ENCODE measurements at regions of chr19 and their contacts with region 1.

Region 1: DNA sequence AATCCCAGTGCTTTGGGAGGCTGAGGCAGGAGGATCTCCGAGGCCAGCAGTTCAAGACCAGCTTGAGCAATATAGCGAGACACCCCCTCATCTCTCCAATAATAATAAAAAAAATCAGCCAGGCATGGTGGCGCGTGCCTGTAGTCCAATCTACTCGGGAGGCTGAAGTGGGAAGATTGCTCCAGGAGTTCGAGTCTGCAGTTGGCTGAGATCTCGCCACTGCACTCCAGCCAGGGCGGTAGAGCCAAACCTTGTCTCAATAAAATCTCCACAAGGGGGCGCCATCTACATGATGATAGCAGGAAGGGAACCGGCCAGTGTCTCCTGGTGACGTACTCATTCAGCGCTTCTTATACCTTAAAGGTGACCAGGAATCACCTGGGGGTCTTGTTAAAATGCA is 13.6 kb upstream of the C5AR1 start:
- DNase-seq: peak; percentile 90
- H3K4me3 ChIP-seq: no peak overlapping the region
- H3K27ac ChIP-seq: no peak overlapping the region
- H3K4me1 ChIP-seq: no peaks in the 10 kb centered on the region
- H3K27me3 ChIP-seq: no peaks in the 10 kb centered on the region
- CTCF ChIP-seq: peak; percentile 64

Region 2: DNA sequence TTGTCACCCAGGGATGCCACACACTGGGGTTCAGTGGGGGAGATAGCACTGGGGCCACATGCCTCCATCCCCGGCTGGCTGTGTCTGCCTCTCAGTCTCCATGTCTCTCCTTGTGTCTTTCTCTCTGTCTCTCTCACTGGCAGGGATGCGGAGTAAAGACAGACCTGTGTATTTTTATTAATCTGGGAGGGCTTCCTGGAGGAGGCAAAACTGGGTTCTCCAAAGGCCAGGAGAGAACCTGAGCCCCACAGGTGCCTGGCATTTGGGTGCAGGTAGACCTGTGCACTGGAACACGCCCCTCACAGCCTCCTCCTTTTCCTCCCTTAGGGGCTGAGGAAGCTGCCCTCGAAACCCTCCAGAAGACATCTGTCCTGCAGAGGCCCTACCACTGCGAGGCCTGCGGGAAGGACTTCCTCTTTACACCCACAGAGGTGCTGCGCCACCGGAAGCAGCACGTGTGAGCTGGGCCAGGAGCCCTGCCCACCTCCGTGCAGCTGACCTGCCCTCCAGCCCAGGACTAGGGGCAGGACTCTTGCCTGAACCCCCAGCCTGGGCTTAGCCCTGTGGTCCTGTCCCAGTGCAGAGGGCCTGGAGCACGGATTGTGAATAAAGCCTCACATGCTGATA is 85.7 kb after region 1 on chr19:
- intact Hi-C with region 1: loop called (anchors 10 kb)
- DNase-seq: no peak
- H3K4me3 ChIP-seq: no peak overlapping the region
- H3K27ac ChIP-seq: no peak overlapping the region
- H3K4me1 ChIP-seq: no peaks in the 10 kb centered on the region
- H3K27me3 ChIP-seq: no peaks in the 10 kb centered on the region
- CTCF ChIP-seq: no peak

Region 3: DNA sequence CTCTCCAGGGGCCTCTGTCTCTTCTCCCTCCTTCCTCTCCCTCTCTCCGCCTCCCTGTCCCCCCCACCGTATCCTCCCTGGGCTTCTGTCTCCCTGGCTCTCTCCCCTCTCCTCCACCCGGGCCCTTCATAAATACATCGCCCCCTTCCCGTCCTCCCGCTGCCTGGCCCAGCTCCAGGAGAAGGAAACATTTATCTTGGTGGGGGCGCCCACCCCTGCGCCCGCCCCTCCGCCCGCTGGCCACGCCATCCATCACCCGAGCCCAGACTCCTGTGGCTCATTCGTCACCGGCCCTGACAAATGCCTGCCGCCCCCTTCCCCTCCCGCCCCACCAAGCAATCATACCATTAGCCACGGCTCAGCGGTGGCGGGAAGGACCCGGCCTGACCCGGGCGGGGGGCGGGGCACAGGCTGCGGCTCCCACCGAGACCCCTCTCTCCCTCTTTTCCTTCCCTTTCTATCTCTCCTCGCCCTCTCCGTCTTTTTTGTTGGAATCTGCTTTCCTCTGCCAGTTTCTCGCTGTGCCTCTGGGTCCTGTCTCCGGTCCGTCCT is 125.9 kb after region 1 on chr19:
- intact Hi-C with region 1: loop called (anchors 5 kb)
- DNase-seq: no peak
- H3K4me3 ChIP-seq: no peak overlapping the region
- H3K27ac ChIP-seq: no peak overlapping the region
- H3K4me1 ChIP-seq: no peaks in the 10 kb centered on the region
- H3K27me3 ChIP-seq: peaks cover 53% of the 10 kb centered on the region
- CTCF ChIP-seq: no peak